ENCODE measurements at regions of chr3 and their contacts with region 1.

Region 1: GRCh38 chr3:99499235-99500158 is 138.9 kb upstream of the COL8A1 start:
- DNase-seq: peak; percentile 16
- ATAC-seq: peak; percentile 87
- H3K4me3 ChIP-seq: no peak overlapping the region
- H3K27ac ChIP-seq: no peak overlapping the region
- H3K4me1 ChIP-seq: no peaks in the 10 kb centered on the region
- H3K27me3 ChIP-seq: no peaks in the 10 kb centered on the region
- CTCF ChIP-seq: peak; percentile 73 to 74 (median 74)
- EP300 ChIP-seq: no peak
- POLR2A ChIP-seq: no peak
- RAD21 ChIP-seq: peak; percentile 75

Region 2: DNA sequence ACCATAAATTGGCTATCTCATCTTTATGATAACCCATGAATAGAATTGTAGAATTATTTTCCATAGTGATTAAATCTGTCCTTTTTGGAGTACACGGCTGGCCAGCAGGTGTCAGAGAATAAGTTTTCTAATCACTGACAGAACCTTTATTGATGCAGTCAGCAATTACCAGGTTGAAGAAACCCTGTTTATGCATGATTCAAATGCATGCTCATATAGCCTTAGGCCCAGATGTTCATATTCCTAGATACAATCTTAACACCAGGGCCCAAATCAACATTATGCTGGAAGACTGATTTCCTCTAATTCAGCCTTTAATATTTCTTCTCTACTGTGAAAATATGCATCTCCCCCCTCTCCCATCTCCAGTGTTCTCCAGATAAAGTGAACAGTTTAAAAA is 354.5 kb before region 1 on chr3:
- CTCF ChIA-PET with region 1: no interaction called
- POLR2A ChIA-PET with region 1: no interaction called
- RAD21 ChIA-PET with region 1: no interaction called
- SMC1A ChIA-PET with region 1: no interaction called
- in situ Hi-C with region 1: no loop called
- intact Hi-C with region 1: no loop called
- DNase-seq: no peak
- ATAC-seq: no peak
- H3K4me3 ChIP-seq: no peak overlapping the region
- H3K27ac ChIP-seq: no peak overlapping the region
- H3K4me1 ChIP-seq: no peaks in the 10 kb centered on the region
- H3K27me3 ChIP-seq: no peaks in the 10 kb centered on the region
- CTCF ChIP-seq: no peak
- EP300 ChIP-seq: no peak
- POLR2A ChIP-seq: no peak
- RAD21 ChIP-seq: no peak

Region 3: GRCh38 chr3:99484871-99485270 is 14.6 kb before region 1 on chr3:
- CTCF ChIA-PET with region 1: interaction called, 17 read pairs
- POLR2A ChIA-PET with region 1: no interaction called
- RAD21 ChIA-PET with region 1: no interaction called
- SMC1A ChIA-PET with region 1: interaction called, 32 read pairs
- in situ Hi-C with region 1: no loop called
- intact Hi-C with region 1: no loop called
- DNase-seq: no peak
- ATAC-seq: no peak
- H3K4me3 ChIP-seq: no peak overlapping the region
- H3K27ac ChIP-seq: no peak overlapping the region
- H3K4me1 ChIP-seq: no peaks in the 10 kb centered on the region; the same call in 1 of the 2 replicates
- H3K27me3 ChIP-seq: no peaks in the 10 kb centered on the region
- CTCF ChIP-seq: no peak
- EP300 ChIP-seq: no peak
- POLR2A ChIP-seq: no peak
- RAD21 ChIP-seq: no peak

Region 4: DNA sequence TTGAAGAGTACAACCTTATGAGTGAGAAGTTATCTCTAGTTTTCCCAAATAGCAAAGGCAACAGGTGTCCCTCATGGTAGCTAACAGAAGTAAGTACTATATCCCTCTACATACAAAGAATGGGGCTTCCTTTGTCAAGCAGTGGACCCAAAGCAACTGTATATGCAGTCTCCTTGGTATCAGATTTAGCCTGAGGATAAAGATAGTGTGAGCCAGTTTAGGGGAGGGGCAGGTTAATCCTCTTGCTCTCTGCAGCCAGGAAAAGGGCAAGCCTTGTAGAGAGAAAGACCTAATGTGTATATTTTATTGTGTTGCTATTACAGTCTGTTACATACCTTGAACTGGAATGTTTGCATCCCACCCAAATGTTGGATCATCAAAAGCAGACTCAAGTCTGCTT is 21.0 kb after region 1 on chr3:
- CTCF ChIA-PET with region 1: interaction called, 7 read pairs
- POLR2A ChIA-PET with region 1: no interaction called
- RAD21 ChIA-PET with region 1: interaction called, 4 read pairs
- SMC1A ChIA-PET with region 1: interaction called, 270 read pairs
- in situ Hi-C with region 1: no loop called
- intact Hi-C with region 1: no loop called
- DNase-seq: no peak
- ATAC-seq: no peak
- H3K4me3 ChIP-seq: no peak overlapping the region
- H3K27ac ChIP-seq: no peak overlapping the region
- H3K4me1 ChIP-seq: no peaks in the 10 kb centered on the region
- H3K27me3 ChIP-seq: no peaks in the 10 kb centered on the region
- CTCF ChIP-seq: no peak
- EP300 ChIP-seq: no peak
- POLR2A ChIP-seq: no peak
- RAD21 ChIP-seq: no peak

Measured in GM12878 (cell line).